ENCODE measurements at regions of chr18 and their contacts with region 1.

Region 1: GRCh38 chr18:41540237-41540871 is 414.7 kb upstream of the PIK3C3 start:
- DNase-seq: no peak
- ATAC-seq: no peak
- H3K4me3 Mint-ChIP-seq: no peak overlapping the region
- H3K27ac Mint-ChIP-seq: no peak overlapping the region
- H3K4me1 Mint-ChIP-seq: no peaks in the 10 kb centered on the region
- H3K27me3 Mint-ChIP-seq: no peaks in the 10 kb centered on the region

Region 2: GRCh38 chr18:41391616-41392595 is 148.4 kb before region 1 on chr18:
- CTCF ChIA-PET with region 1: no interaction called
- POLR2A ChIA-PET with region 1: no interaction called
- intact Hi-C with region 1: no loop called
- DNase-seq: peak; percentile 18
- ATAC-seq: no peak
- H3K4me3 Mint-ChIP-seq: no peak overlapping the region
- H3K27ac Mint-ChIP-seq: no peak overlapping the region
- H3K4me1 Mint-ChIP-seq: no peaks in the 10 kb centered on the region
- H3K27me3 Mint-ChIP-seq: no peaks in the 10 kb centered on the region

Region 3: GRCh38 chr18:41569867-41570266 is 29.5 kb after region 1 on chr18:
- CTCF ChIA-PET with region 1: no interaction called
- POLR2A ChIA-PET with region 1: no interaction called
- intact Hi-C with region 1: loop called in 1 of 2 experiments (anchors 1 kb)
- DNase-seq: no peak
- ATAC-seq: no peak
- H3K4me3 Mint-ChIP-seq: no peak overlapping the region
- H3K27ac Mint-ChIP-seq: no peak overlapping the region
- H3K4me1 Mint-ChIP-seq: no peaks in the 10 kb centered on the region
- H3K27me3 Mint-ChIP-seq: no peaks in the 10 kb centered on the region

Measured in activated CD4-positive, alpha-beta T cell treated with anti-CD3 and anti-CD28 coated beads for 36 hours (primary cell).